PC-9 (cell line): ENCODE measurements at regions of chr7 and their contacts with region 1.

Region 1: GRCh38 chr7:99837649-99838361 is 10.0 kb downstream of the CYP3A43 start:
- DNase-seq: peak; percentile 5 to 58
- H3K4me3 ChIP-seq: no peak overlapping the region
- H3K27ac ChIP-seq: no peak overlapping the region
- H3K4me1 ChIP-seq: peaks cover 4% of the 10 kb centered on the region; the same call in 1 of the 2 replicates
- H3K27me3 ChIP-seq: no peaks in the 10 kb centered on the region
- CTCF ChIP-seq: peak; percentile 58

Region 2: GRCh38 chr7:99374103-99375064 is 463.4 kb before region 1 on chr7 and contains the start of gene ARPC1B:
- CTCF ChIA-PET with region 1: no interaction called
- POLR2A ChIA-PET with region 1: interaction called, 12 read pairs
- intact Hi-C with region 1: no loop called
- DNase-seq: peak; percentile 57 to 82
- H3K4me3 ChIP-seq: peak within 1 kb of the TSS; percentile 63
- H3K27ac ChIP-seq: no peak within 1 kb of the TSS
- H3K4me1 ChIP-seq: peaks cover 21% of the 10 kb centered on the region
- H3K27me3 ChIP-seq: no peaks in the 10 kb centered on the region
- CTCF ChIP-seq: no peak
- total RNA-seq, gene ARPC1B: 276 and 289 TPM in 2 replicates

Region 3: DNA sequence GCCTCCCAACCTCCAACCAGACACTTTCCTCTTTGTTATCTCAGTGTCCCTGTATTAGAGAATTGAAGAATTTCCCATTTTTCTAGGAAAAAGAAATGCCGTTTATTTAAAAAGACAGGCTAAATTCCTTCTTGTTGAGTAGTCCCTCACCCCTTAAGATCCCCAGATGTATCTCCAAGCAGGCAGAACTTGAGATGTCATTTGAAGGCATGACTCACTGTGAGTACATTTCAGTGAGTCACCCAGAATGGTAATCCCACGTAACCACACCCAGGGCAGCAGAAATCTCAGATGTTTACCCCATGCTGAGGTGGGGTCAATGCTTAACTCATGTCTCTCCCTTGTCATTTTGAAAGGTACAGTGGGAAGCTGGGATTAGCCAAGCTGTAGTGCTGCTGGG is 275.0 kb before region 1 on chr7:
- CTCF ChIA-PET with region 1: no interaction called
- POLR2A ChIA-PET with region 1: no interaction called
- intact Hi-C with region 1: loop called (anchors 2 kb)
- DNase-seq: peak; percentile 80 to 95
- H3K4me3 ChIP-seq: no peak overlapping the region
- H3K27ac ChIP-seq: peak overlapping the region; percentile 60
- H3K4me1 ChIP-seq: peaks cover 30% of the 10 kb centered on the region
- H3K27me3 ChIP-seq: no peaks in the 10 kb centered on the region
- CTCF ChIP-seq: no peak

Region 4: DNA sequence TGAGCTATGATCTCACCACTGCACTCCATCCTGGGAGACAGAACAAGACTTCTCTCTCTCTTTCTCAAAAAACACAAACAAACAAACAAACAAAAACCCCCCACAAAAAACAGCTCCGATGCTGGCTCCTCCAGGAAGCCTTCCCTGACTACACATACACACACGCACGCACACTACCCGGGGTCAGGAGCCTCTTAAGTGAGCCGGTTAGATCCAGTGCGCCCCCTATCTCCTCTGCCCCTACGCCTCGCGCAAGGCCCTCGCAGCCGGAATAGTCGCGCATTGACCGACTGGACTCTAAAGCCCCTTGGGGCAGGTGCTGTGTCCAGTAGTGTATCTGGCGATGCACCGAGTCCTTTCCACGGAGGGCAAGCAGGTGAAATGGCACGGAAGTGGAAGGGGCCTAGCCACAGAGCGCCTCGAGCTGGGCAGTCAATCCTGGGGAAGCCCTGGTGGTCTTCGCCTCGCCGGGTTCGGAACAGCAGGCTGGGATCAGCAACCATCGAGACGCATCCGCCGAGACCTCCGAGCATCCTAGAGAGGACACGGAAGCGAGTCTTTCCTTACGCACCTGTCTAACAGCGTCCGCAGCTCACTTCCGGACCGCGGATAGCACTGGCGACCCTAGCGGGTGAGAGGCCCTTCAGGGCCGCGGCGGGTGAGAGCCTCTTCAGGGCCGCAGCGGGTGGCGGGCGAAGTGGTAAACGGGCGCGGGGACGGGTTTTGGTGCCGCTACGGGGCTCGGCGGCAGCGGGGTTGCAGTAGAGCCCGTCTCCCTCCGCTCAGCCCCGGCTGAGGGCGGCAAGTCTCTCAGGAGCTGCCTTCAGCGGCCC is 221.2 kb before region 1 on chr7 and contains the start of gene ZSCAN25:
- CTCF ChIA-PET with region 1: interaction called, 5 read pairs
- POLR2A ChIA-PET with region 1: no interaction called
- intact Hi-C with region 1: loop called (anchors 5 kb)
- DNase-seq: peak; percentile 79 to 91
- H3K4me3 ChIP-seq: peak within 1 kb of the TSS; percentile 66
- H3K27ac ChIP-seq: no peak within 1 kb of the TSS
- H3K4me1 ChIP-seq: peaks cover 24% of the 10 kb centered on the region
- H3K27me3 ChIP-seq: 0 out of 2 replicates have a peak, but pooled peaks cover 5% of the 10 kb centered on the region
- CTCF ChIP-seq: peak; percentile 60; the same call in 1 of the 2 replicates
- total RNA-seq, gene ZSCAN25: 20.5 and 21.8 TPM in 2 replicates

Region 5: DNA sequence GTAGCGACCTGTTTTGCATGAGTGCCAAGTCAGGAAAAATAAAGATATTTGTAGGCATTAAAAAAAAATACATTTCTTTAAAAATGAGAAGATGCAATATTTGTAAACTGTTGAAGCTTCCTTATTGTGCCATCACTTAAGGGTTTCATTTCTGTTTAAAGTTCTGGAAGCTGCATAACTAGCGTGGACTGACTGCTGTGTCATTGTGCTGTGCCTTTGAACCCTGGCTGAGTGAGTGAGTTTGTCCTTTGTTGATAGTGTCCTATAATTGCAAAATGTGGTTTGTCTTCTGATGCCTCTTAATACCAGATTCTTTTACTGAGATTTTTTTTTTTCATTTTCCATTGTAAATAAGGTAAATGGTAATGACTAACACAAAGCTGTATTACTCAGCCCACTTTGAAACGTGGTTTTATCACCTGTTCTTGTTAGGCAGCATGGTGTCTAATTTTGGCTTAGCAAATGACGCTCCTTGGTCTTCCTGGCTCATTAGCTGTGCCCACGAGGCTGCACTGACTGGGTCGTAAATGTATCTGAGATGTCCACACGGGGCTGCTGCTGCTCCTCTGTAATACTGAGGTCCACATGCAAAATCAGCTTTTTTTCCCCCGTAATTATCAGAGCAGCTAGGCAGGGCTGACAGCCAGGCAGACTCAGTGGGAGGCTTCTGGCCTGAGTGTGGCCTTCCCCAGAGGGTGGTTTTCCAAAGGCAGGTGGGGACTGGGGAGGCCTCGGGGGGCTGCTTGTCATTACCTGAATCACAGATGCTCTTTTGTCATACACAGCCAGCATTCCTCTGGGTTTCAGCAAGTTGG is 206.3 kb before region 1 on chr7:
- CTCF ChIA-PET with region 1: interaction called, 8 read pairs
- POLR2A ChIA-PET with region 1: no interaction called
- intact Hi-C with region 1: loop called (anchors 1 kb)
- DNase-seq: peak; percentile 50 to 73
- H3K4me3 ChIP-seq: no peak overlapping the region
- H3K27ac ChIP-seq: no peak overlapping the region
- H3K4me1 ChIP-seq: no peaks in the 10 kb centered on the region
- H3K27me3 ChIP-seq: no peaks in the 10 kb centered on the region
- CTCF ChIP-seq: peak; percentile 76

Region 6: DNA sequence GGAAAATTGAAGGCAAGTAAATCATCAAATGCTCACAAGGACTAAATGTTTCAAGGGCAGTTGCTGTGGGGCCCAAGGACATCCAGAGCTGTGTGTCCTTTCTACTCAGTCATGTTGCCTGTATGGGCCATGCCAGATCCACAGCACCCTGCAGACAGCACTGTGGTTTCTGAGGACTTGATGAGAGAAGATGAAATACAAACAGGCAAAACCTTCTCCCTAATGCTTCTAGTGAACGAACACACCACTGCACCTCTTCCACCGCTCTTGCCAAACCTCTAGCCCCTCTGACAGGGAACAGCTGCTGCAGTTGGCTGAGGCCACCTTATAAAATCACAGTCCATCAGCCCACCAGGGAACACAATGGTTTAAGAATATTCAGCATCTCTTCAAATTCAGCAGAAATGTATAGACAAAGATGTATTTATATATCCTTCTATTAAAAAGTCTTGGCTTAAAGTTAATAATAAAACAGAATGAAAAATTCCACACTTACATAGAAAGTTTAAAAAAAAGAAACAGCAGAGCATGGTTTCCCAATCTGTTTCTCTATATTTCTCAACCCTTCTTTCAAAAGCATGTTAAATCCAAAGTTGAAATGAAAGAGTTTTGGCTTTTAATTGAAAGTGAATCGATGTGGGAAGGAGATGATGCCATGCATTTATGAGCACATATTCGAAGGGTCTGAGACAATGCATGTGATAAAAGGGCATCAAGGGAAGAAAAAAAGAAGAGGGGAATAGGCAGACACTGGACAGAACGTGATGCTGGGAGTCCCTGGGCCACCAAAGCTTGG is 116.8 kb before region 1 on chr7:
- CTCF ChIA-PET with region 1: no interaction called
- POLR2A ChIA-PET with region 1: no interaction called
- intact Hi-C with region 1: no loop called
- DNase-seq: no peak
- H3K4me3 ChIP-seq: no peak overlapping the region
- H3K27ac ChIP-seq: no peak overlapping the region
- H3K4me1 ChIP-seq: no peaks in the 10 kb centered on the region
- H3K27me3 ChIP-seq: no peaks in the 10 kb centered on the region
- CTCF ChIP-seq: no peak

Region 7: GRCh38 chr7:99848420-99849216 is 10.8 kb after region 1 on chr7:
- CTCF ChIA-PET with region 1: no interaction called
- POLR2A ChIA-PET with region 1: interaction called, 31 read pairs
- intact Hi-C with region 1: no loop called
- DNase-seq: no peak
- H3K4me3 ChIP-seq: no peak overlapping the region
- H3K27ac ChIP-seq: no peak overlapping the region
- H3K4me1 ChIP-seq: no peaks in the 10 kb centered on the region
- H3K27me3 ChIP-seq: no peaks in the 10 kb centered on the region
- CTCF ChIP-seq: no peak